ENCODE measurements at regions of chr7 and their contacts with region 1.

Region 1: GRCh38 chr7:148987010-148987750 is 41.1 kb downstream of the PDIA4 start:
- DNase-seq: peak; percentile 89
- H3K4me3 Mint-ChIP-seq: peak overlapping the region; percentile 92
- H3K27ac Mint-ChIP-seq: peak overlapping the region; percentile 80
- H3K4me1 Mint-ChIP-seq: peaks cover 29% of the 10 kb centered on the region
- H3K27me3 Mint-ChIP-seq: no peaks in the 10 kb centered on the region
- CTCF ChIP-seq: no peak

Region 2: DNA sequence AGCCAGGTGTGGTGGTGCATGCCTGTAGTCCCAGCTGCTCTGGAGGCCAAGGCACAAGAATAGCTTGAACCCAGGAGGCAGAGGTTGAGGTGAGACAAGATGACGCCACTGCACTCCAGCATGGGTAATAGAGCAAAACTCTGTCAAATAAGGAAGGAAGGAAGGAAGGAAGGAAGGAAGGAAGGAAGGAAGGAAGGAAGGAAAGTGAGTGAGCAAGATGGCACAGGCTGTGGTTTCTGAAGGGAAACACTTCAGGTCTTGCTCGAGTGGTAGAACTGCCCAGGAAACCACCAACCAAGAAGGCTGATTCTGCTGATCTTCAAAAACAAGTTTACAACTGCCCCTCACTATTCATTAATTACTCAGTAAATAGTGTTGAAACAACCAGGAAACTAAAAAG is 148.3 kb before region 1 on chr7:
- CTCF ChIA-PET with region 1: no interaction called
- POLR2A ChIA-PET with region 1: no interaction called
- intact Hi-C with region 1: no loop called
- DNase-seq: no peak
- H3K4me3 Mint-ChIP-seq: no peak overlapping the region
- H3K27ac Mint-ChIP-seq: peak overlapping the region; percentile 71
- H3K4me1 Mint-ChIP-seq: peaks cover 11% of the 10 kb centered on the region
- H3K27me3 Mint-ChIP-seq: no peaks in the 10 kb centered on the region
- CTCF ChIP-seq: no peak

Region 3: DNA sequence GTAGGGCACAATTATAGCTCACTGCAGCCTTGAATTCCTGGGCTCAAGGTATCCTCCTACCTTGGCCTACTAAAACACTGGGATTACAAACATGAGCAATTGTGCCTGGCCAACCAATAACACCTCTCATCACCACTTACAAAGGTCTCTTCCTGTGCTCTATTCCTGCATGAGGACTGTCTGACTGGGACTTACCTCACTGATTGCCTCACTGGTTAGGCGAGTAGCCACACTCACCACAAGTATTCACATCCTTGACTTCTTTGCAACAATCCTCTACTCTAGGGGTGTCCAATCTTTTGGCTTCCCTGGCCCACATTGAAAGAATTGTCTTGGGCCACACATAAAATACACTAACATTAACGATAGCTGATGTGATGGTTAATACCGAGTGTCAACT is 63.8 kb after region 1 on chr7:
- CTCF ChIA-PET with region 1: no interaction called
- POLR2A ChIA-PET with region 1: no interaction called
- intact Hi-C with region 1: no loop called
- DNase-seq: no peak
- H3K4me3 Mint-ChIP-seq: no peak overlapping the region
- H3K27ac Mint-ChIP-seq: no peak overlapping the region
- H3K4me1 Mint-ChIP-seq: no peaks in the 10 kb centered on the region
- H3K27me3 Mint-ChIP-seq: no peaks in the 10 kb centered on the region
- CTCF ChIP-seq: no peak

Region 4: GRCh38 chr7:149071641-149072437 is 84.7 kb after region 1 on chr7:
- CTCF ChIA-PET with region 1: interaction called, 4 read pairs
- POLR2A ChIA-PET with region 1: interaction called, 3 read pairs
- intact Hi-C with region 1: loop called (anchors 5 kb)
- DNase-seq: no peak
- H3K4me3 Mint-ChIP-seq: no peak overlapping the region
- H3K27ac Mint-ChIP-seq: no peak overlapping the region
- H3K4me1 Mint-ChIP-seq: peaks cover 6% of the 10 kb centered on the region
- H3K27me3 Mint-ChIP-seq: no peaks in the 10 kb centered on the region
- CTCF ChIP-seq: no peak

Region 5: GRCh38 chr7:149257146-149257545 is 270.0 kb after region 1 on chr7:
- CTCF ChIA-PET with region 1: no interaction called
- POLR2A ChIA-PET with region 1: no interaction called
- intact Hi-C with region 1: no loop called
- DNase-seq: no peak
- H3K4me3 Mint-ChIP-seq: no peak overlapping the region
- H3K27ac Mint-ChIP-seq: no peak overlapping the region
- H3K4me1 Mint-ChIP-seq: peaks cover 10% of the 10 kb centered on the region
- H3K27me3 Mint-ChIP-seq: no peaks in the 10 kb centered on the region
- CTCF ChIP-seq: no peak

Measured in MCF 10A (cell line).